AG04450 (cell line): ENCODE measurements at regions of chr15 and their contacts with region 1.

Region 1: DNA sequence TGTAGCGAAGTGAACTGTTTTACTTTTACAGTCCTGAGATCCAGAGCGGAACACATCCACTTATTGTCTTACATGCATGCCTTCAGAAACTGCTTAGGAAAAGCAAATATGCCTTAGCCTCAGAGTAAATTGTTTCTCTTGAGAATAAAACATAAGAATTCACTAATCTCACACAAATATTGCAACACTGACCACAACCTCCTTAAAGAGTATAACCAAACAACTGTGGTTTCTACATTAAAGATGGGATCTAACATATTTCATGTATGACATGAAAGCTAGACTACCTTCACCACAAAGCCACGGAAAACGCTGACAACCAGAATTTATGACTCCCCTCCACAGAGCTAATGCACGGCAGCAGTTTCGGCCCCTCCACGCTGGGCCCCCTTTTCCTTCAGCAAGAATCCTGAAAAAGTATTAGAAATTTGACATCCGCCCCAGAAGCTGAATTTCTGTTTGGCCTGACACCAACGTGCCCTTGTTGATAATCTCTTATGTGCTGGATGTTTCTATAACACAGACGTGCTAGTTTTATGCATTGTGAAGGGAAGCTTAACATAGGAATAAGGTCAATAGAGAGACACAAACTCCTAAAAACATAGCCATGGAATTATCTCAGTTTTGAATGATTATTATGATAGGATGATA is 84.6 kb downstream of the GREM1 start:
- DNase-seq: peak; percentile 88
- H3K4me3 ChIP-seq: no peak overlapping the region
- H3K27ac ChIP-seq: peak overlapping the region; percentile 58
- H3K27me3 ChIP-seq: no peaks in the 10 kb centered on the region
- CTCF ChIP-seq: no peak

Region 2: DNA sequence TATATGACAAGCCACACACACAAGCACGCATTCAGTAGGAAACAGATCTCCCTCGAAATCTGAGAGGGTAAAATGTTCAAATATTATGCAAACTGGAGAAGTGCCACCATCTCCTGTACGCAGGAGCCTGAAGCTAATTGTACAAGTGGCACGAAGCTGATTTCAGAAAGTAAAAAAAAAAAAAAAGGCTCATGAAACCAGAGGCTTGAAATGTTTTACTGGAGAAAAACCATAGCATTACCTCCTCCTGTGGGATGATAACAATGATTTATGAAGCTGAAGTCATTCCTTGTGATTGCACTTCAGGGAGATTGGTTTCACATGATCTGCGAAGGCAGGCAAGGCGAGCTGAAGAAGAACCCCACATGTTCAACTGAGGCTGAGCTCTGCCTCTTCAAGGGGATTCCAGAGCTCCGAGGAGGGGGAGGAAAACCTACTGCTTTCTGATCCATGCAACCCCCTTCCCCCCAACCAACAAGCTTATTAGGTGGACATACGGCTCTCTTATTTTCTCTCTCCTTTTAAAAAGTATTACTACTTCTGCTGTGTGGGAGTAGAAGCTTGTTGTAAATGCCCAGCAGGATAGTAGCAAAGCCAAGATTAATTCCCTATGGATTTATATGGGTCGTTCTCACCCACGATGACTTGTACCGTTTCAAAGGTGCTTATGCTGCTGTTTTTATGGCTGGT is 16.5 kb after region 1 on chr15:
- CTCF ChIA-PET with region 1: interaction called, 6 read pairs
- POLR2A ChIA-PET with region 1: interaction called, 16 read pairs
- DNase-seq: peak; percentile 63
- H3K4me3 ChIP-seq: no peak overlapping the region
- H3K27ac ChIP-seq: peak overlapping the region; percentile 62
- H3K27me3 ChIP-seq: no peaks in the 10 kb centered on the region
- CTCF ChIP-seq: no peak

Region 3: GRCh38 chr15:33132722-33133345 is 330.4 kb after region 1 on chr15:
- CTCF ChIA-PET with region 1: no interaction called
- POLR2A ChIA-PET with region 1: no interaction called
- DNase-seq: peak; percentile 61
- H3K4me3 ChIP-seq: no peak overlapping the region
- H3K27ac ChIP-seq: no peak overlapping the region
- H3K27me3 ChIP-seq: no peaks in the 10 kb centered on the region
- CTCF ChIP-seq: peak; percentile 89